ENCODE measurements at regions of chr15 and their contacts with region 1.

Region 1: GRCh38 chr15:63048115-63048775 is 5.7 kb downstream of the TPM1 start:
- DNase-seq: peak; percentile 77 to 84 (median 82)
- H3K4me3 ChIP-seq: peak overlapping the region; percentile 62 to 86 (median 74)
- H3K4me3 Mint-ChIP-seq: peak overlapping the region; percentile 92 to 99
- H3K27ac ChIP-seq: peak overlapping the region; percentile 31 to 66
- H3K27ac Mint-ChIP-seq: peak overlapping the region in 5 of 7 donors; percentile 53 to 85 (median 75)
- H3K4me1 ChIP-seq: peaks cover 25 to 30% of the 10 kb centered on the region in 2 donors
- H3K4me1 Mint-ChIP-seq: peaks cover 30% of the 10 kb centered on the region
- H3K27me3 ChIP-seq: peaks cover 42 to 57% of the 10 kb centered on the region in 2 donors
- H3K27me3 Mint-ChIP-seq: peaks cover 46 to 64% (median 54%) of the 10 kb centered on the region in 3 donors
- CTCF ChIP-seq: peak; percentile 97

Region 2: GRCh38 chr15:62985768-62986167 is 62.5 kb before region 1 on chr15:
- intact Hi-C with region 1: no loop called
- DNase-seq: no peak
- H3K4me3 ChIP-seq: no peak overlapping the region
- H3K4me3 Mint-ChIP-seq: no peak overlapping the region
- H3K27ac ChIP-seq: no peak overlapping the region
- H3K27ac Mint-ChIP-seq: no peak overlapping the region
- H3K4me1 ChIP-seq: no peaks in the 10 kb centered on the region
- H3K4me1 Mint-ChIP-seq: no peaks in the 10 kb centered on the region
- H3K27me3 ChIP-seq: peaks cover 0 to 2% of the 10 kb centered on the region in 2 donors
- H3K27me3 Mint-ChIP-seq: peaks cover 7 to 17% (median 7%) of the 10 kb centered on the region in 3 donors
- CTCF ChIP-seq: no peak

Region 3: GRCh38 chr15:63093486-63094205 is 45.4 kb after region 1 on chr15:
- intact Hi-C with region 1: loop called in 1 of 2 experiments (anchors 5 kb)
- DNase-seq: peak; percentile 57 to 75 (median 71)
- H3K4me3 ChIP-seq: no peak overlapping the region
- H3K4me3 Mint-ChIP-seq: no peak overlapping the region
- H3K27ac ChIP-seq: no peak overlapping the region
- H3K27ac Mint-ChIP-seq: no peak overlapping the region
- H3K4me1 ChIP-seq: peaks cover 10 to 15% of the 10 kb centered on the region in 2 donors
- H3K4me1 Mint-ChIP-seq: peaks cover 19% of the 10 kb centered on the region
- H3K27me3 ChIP-seq: no peaks in the 10 kb centered on the region
- H3K27me3 Mint-ChIP-seq: peaks cover 1 to 5% (median 1%) of the 10 kb centered on the region in 3 donors
- CTCF ChIP-seq: peak; percentile 84

Region 4: DNA sequence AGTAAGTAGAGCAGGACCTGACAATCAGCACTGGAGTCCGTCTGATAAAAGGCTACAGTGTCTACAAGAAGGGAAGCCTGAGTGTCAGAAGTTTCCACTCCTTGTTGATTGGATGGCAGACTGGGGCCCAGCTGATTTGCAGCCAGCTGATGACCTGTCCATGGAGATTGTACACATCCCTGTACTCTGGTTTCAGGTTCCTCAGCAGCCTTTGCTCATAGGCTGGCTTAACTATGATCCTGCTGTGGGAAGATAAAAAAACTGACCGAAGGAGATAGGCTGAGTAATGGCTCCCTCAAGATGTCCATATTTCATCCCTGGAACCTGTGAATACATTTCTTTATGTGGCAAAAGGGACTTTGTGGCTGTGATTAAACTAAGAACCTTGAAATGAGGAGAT is 61.7 kb after region 1 on chr15:
- intact Hi-C with region 1: no loop called
- DNase-seq: no peak
- H3K4me3 ChIP-seq: no peak overlapping the region
- H3K4me3 Mint-ChIP-seq: no peak overlapping the region
- H3K27ac ChIP-seq: no peak overlapping the region
- H3K27ac Mint-ChIP-seq: no peak overlapping the region
- H3K4me1 ChIP-seq: peaks cover 4 to 8% of the 10 kb centered on the region in 2 donors
- H3K4me1 Mint-ChIP-seq: peaks cover 30% of the 10 kb centered on the region
- H3K27me3 ChIP-seq: no peaks in the 10 kb centered on the region
- H3K27me3 Mint-ChIP-seq: peaks cover 0 to 3% (median 0%) of the 10 kb centered on the region in 3 donors
- CTCF ChIP-seq: no peak

Region 5: GRCh38 chr15:63283126-63283525 is 234.9 kb after region 1 on chr15:
- intact Hi-C with region 1: loop called (anchors 5 to 10 kb)
- DNase-seq: peak; percentile 86 to 91 (median 91)
- H3K4me3 ChIP-seq: peak overlapping the region; percentile 1 to 41 (median 24)
- H3K4me3 Mint-ChIP-seq: peak overlapping the region; percentile 54 to 62
- H3K27ac ChIP-seq: peak overlapping the region; percentile 60 to 91
- H3K27ac Mint-ChIP-seq: peak overlapping the region; percentile 68 to 93 (median 91)
- H3K4me1 ChIP-seq: peaks cover 20 to 38% of the 10 kb centered on the region in 2 donors
- H3K4me1 Mint-ChIP-seq: peaks cover 26% of the 10 kb centered on the region
- H3K27me3 ChIP-seq: no peaks in the 10 kb centered on the region
- H3K27me3 Mint-ChIP-seq: no peaks in the 10 kb centered on the region
- CTCF ChIP-seq: no peak

Region 6: GRCh38 chr15:63288778-63289378 is 240.6 kb after region 1 on chr15:
- intact Hi-C with region 1: loop called (anchors 5 to 10 kb)
- DNase-seq: peak; percentile 13 to 47 (median 23)
- H3K4me3 ChIP-seq: no peak overlapping the region
- H3K4me3 Mint-ChIP-seq: no peak overlapping the region
- H3K27ac ChIP-seq: no peak overlapping the region
- H3K27ac Mint-ChIP-seq: no peak overlapping the region
- H3K4me1 ChIP-seq: peaks cover 0 to 4% of the 10 kb centered on the region in 2 donors
- H3K4me1 Mint-ChIP-seq: peaks cover 20% of the 10 kb centered on the region
- H3K27me3 ChIP-seq: no peaks in the 10 kb centered on the region
- H3K27me3 Mint-ChIP-seq: peaks cover 0 to 3% (median 2%) of the 10 kb centered on the region in 3 donors
- CTCF ChIP-seq: peak; percentile 79

Region 7: DNA sequence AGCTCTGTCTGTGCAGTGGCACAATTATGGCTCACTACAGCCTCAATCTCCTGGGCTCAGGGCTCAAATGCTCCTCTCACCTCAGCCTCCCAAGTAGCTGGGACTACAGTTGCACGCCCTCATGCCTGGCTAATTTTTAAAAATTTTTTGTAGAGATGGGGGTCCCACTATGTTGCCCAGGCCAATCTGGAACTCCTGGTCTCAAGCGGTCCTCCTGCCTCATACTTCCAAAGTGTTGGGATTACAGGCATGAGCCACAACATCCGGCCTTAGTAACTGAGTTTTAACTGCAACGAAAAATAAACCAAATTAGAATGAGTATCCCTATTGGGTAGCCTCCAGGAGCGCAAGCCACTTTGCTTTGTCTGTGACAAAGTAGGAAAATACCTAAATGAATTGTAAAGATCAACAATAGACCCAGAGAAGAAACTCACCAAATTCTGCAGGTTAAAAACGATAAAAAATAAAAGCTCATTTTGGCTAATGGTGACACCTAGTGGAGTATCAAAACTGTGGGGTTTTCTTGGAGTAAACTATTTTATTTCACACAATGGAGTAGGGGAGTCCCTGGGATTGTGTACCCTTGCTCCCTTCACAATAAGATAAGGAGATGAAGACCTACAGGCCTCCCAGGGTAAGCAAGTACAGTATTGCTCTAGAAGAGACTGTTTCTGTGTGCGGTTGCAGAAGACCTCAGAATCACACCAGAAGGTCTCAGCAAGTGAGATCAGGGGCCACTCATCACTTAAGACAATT is 354.4 kb after region 1 on chr15:
- intact Hi-C with region 1: loop called in 1 of 2 experiments (anchors 5 kb)
- DNase-seq: peak in 1 of 3 donors; percentile 26
- H3K4me3 ChIP-seq: no peak overlapping the region
- H3K4me3 Mint-ChIP-seq: no peak overlapping the region
- H3K27ac ChIP-seq: no peak overlapping the region
- H3K27ac Mint-ChIP-seq: no peak overlapping the region
- H3K4me1 ChIP-seq: peaks cover 11 to 22% of the 10 kb centered on the region in 2 donors
- H3K4me1 Mint-ChIP-seq: peaks cover 35% of the 10 kb centered on the region
- H3K27me3 ChIP-seq: no peaks in the 10 kb centered on the region
- H3K27me3 Mint-ChIP-seq: peaks cover 0 to 2% (median 0%) of the 10 kb centered on the region in 3 donors
- CTCF ChIP-seq: peak; percentile 44